ENCODE measurements at regions of chr5 and their contacts with region 1.

Region 1: DNA sequence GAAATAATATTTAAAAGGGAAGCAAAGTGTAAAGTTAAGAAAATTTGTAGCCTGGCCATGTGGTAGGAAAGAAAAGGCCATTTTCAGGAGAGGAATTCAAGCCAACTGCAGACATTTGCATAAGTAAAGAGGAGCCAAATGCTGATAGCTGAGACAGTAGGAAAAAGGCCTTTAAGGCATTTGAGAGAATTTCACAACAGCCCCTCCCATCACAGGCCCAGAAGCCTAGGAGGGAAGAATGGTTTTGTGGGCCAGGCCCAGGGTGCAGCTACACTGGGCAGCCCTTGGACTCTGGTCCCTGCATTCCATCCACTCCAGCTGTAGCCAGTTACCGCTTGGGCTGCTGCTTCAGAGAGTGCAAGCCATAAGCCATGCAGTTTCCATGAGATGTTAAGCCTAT is 1556.8 kb downstream of the EFNA5 start:
- DNase-seq: no peak
- ATAC-seq: no peak
- H3K4me3 ChIP-seq: no peak overlapping the region
- H3K4me3 Mint-ChIP-seq: no peak overlapping the region
- H3K27ac ChIP-seq: no peak overlapping the region
- H3K27ac Mint-ChIP-seq: no peak overlapping the region
- H3K4me1 ChIP-seq: no peaks in the 10 kb centered on the region
- H3K4me1 Mint-ChIP-seq: no peaks in the 10 kb centered on the region
- H3K27me3 ChIP-seq: no peaks in the 10 kb centered on the region
- H3K27me3 Mint-ChIP-seq: no peaks in the 10 kb centered on the region
- CTCF ChIP-seq: no peak

Region 2: GRCh38 chr5:106136061-106136460 is 22.1 kb after region 1 on chr5:
- CTCF ChIA-PET with region 1: no interaction called
- POLR2A ChIA-PET with region 1: no interaction called
- intact Hi-C with region 1: loop called in 1 of 2 experiments (anchors 1 kb)
- DNase-seq: no peak
- ATAC-seq: no peak
- H3K4me3 ChIP-seq: no peak overlapping the region
- H3K4me3 Mint-ChIP-seq: no peak overlapping the region
- H3K27ac ChIP-seq: no peak overlapping the region
- H3K27ac Mint-ChIP-seq: no peak overlapping the region
- H3K4me1 ChIP-seq: no peaks in the 10 kb centered on the region
- H3K4me1 Mint-ChIP-seq: no peaks in the 10 kb centered on the region
- H3K27me3 ChIP-seq: no peaks in the 10 kb centered on the region
- H3K27me3 Mint-ChIP-seq: no peaks in the 10 kb centered on the region
- CTCF ChIP-seq: no peak

Measured in CD8-positive, alpha-beta T cell (primary cell).